Natural killer cell (primary cell): ENCODE measurements at regions of chr6 and their contacts with region 1.

Region 1: DNA sequence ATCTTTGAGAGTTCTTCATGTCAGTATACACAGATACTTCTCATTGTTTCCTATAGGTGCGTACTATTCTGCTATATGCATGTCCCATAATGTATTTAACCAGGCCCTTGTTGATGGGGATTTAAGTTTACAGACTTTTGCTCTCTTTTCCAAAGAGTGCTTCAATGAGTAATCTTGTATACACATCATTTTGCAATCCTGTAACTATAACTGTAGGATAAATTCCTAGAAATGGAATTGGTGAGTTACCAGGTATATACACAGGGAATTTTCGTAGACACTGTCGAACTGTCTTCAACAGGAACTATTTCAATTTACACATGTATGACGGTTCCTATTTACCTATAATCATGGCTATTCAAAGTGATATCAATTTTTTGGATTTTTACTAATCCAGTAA is 15.2 kb upstream of the SNRPC start:
- DNase-seq: no peak
- ATAC-seq: no peak
- H3K4me3 ChIP-seq: no peak overlapping the region
- H3K4me3 Mint-ChIP-seq: no peak overlapping the region
- H3K27ac ChIP-seq: no peak overlapping the region
- H3K27ac Mint-ChIP-seq: no peak overlapping the region
- H3K4me1 ChIP-seq: no peaks in the 10 kb centered on the region
- H3K4me1 Mint-ChIP-seq: no peaks in the 10 kb centered on the region
- H3K27me3 ChIP-seq: no peaks in the 10 kb centered on the region
- H3K27me3 Mint-ChIP-seq: no peaks in the 10 kb centered on the region
- CTCF ChIP-seq: no peak

Region 2: GRCh38 chr6:35195120-35195780 is 453.2 kb after region 1 on chr6:
- intact Hi-C with region 1: loop called (anchors 5 kb)
- DNase-seq: no peak
- ATAC-seq: no peak
- H3K4me3 ChIP-seq: no peak overlapping the region
- H3K4me3 Mint-ChIP-seq: no peak overlapping the region
- H3K27ac ChIP-seq: no peak overlapping the region
- H3K27ac Mint-ChIP-seq: no peak overlapping the region
- H3K4me1 ChIP-seq: peaks cover 28% of the 10 kb centered on the region
- H3K4me1 Mint-ChIP-seq: peaks cover 16% of the 10 kb centered on the region in 2 donors
- H3K27me3 ChIP-seq: peaks cover 4% of the 10 kb centered on the region
- H3K27me3 Mint-ChIP-seq: peaks cover 11 to 32% of the 10 kb centered on the region in 2 donors
- CTCF ChIP-seq: no peak